ENCODE measurements at regions of chr2 and their contacts with region 1.

Region 1: DNA sequence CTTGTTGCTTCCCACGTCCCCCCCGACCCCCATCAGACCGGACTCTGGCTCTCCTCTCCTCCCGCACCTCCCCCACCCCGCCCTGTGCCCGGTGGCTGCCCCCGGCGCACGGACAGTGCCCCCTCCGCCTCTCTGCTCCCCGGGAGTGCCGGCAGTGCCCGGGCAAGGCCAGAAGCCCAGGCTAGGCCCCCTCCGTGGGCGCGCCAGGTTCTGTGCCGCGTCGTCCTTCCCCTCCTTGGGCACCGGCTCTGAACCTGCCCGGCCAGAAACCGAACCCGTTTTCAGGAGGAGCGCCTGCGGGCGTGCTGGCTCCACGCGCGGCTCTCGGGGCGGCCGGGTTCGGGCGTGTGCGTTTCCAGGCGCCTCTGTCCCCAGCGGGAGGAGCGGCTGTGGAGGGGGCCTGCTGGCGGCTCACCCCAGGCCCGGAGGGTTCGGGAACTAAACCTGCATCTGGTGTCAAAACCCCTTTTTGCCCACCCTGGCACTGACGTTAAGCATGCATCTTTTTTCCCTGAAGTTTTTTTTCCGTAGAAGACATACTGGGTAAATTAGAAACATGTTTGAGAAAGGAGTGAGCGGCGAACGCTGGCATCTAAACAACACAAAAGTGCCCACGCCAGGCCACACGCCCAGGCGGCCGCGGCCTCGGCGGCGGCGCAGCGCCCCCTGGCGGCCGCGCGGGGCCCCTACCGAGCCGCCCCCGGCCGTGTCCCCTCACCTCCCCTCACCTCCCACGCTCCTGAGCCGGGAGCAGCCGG is 123.9 kb upstream of the SLC1A4 start:
- DNase-seq: peak; percentile 78
- ATAC-seq: peak; percentile 74
- H3K4me3 Mint-ChIP-seq: peak overlapping the region; percentile 52
- H3K27ac Mint-ChIP-seq: no peak overlapping the region
- H3K4me1 Mint-ChIP-seq: no peaks in the 10 kb centered on the region
- H3K27me3 Mint-ChIP-seq: peaks cover 6% of the 10 kb centered on the region

Region 2: GRCh38 chr2:64052468-64053241 is 812.6 kb before region 1 on chr2:
- CTCF ChIA-PET with region 1: no interaction called
- POLR2A ChIA-PET with region 1: no interaction called
- intact Hi-C with region 1: loop called (anchors 5 kb)
- DNase-seq: no peak
- ATAC-seq: no peak
- H3K4me3 Mint-ChIP-seq: no peak overlapping the region
- H3K27ac Mint-ChIP-seq: no peak overlapping the region
- H3K4me1 Mint-ChIP-seq: peaks cover 40% of the 10 kb centered on the region
- H3K27me3 Mint-ChIP-seq: no peaks in the 10 kb centered on the region

Region 3: GRCh38 chr2:64586883-64587481 is 278.3 kb before region 1 on chr2:
- CTCF ChIA-PET with region 1: interaction called, 7 read pairs
- POLR2A ChIA-PET with region 1: no interaction called
- intact Hi-C with region 1: loop called (anchors 1 kb)
- DNase-seq: no peak
- ATAC-seq: peak; percentile 44
- H3K4me3 Mint-ChIP-seq: no peak overlapping the region
- H3K27ac Mint-ChIP-seq: no peak overlapping the region
- H3K4me1 Mint-ChIP-seq: peaks cover 20% of the 10 kb centered on the region
- H3K27me3 Mint-ChIP-seq: no peaks in the 10 kb centered on the region

Region 4: DNA sequence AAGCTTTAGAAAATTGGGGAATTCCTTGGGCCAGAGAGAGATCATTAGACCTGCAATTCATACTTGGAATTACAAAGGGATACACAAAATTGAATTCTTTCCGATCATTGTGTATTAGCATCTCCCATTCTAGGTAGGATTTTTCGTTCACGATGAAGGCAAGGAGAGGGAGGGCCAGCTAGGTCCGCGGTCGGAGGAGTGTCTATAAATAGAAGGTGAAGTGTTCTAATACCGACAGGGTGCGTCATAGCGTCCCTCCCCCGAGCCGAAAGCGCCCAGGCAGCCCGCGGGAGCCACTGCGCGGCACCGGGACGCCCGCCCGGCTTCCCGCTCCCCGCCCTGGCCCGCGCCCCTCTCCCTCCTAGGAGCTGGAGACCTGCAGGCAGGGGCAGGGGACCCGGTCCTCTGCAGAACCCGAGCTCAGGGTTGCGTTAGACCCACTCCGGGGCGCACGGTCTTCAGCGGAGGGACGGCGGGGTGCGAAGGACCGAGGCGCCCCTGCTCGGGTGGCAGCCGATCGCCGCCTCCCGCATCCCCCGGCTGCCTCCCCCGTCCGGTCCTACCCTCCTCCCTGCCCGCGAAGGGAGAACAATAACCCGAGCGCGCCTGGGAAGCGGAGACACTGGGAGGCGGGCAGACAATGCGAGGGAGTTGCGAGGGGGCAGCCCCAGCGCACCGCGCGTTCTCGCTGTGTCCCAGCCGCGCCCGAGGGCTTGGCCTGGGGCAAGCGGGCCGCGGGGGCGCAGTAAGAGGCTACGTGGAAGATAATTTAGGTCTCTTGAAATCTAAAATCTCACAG is 97.4 kb before region 1 on chr2:
- CTCF ChIA-PET with region 1: no interaction called
- POLR2A ChIA-PET with region 1: no interaction called
- intact Hi-C with region 1: loop called in 1 of 2 experiments (anchors 1 kb)
- DNase-seq: peak; percentile 86
- ATAC-seq: peak; percentile 84
- H3K4me3 Mint-ChIP-seq: peak overlapping the region; percentile 71
- H3K27ac Mint-ChIP-seq: peak overlapping the region; percentile 80
- H3K4me1 Mint-ChIP-seq: peaks cover 25% of the 10 kb centered on the region
- H3K27me3 Mint-ChIP-seq: peaks cover 2% of the 10 kb centered on the region

Region 5: DNA sequence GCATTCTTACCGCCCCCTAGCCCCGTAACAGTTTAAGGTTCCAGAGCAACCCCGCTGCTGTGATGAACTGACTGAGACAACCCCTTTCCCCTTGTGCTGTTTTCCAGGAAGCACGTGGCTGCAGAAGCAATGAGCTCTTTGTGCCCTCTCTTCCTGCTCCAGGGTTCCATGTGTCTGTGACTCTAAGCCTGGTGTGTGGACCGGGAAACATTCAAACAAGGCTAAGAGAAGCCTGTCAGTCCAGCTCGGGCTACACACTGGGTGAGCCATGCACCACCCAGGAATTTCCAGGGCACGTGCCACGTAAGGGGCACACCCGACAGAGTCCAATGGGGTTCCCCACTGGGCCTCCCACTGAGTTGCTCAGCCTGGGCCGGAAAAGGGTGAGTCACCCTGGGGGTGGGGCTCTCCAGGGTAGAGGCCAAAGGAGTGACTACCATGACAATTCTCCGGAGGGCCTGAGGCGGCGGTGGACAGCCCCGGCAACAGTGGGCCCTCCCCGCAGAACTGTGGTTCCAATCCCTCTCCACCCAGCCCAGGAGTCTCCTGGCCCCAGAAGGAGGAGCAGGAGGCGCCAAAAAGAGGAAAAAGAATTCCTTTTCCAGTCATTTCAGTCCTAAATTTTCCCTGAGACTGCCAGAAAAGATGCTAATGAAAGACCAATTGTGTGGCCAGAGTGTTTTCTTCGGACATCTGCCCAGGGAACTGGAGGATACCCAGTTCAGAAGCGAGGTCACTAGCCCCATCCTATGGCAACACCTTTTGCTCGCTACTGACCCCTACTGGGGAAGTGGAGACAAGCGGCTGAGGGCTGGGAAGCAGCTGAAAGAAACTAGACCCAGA is 33.9 kb before region 1 on chr2:
- CTCF ChIA-PET with region 1: interaction called, 6 read pairs
- POLR2A ChIA-PET with region 1: no interaction called
- intact Hi-C with region 1: loop called in 1 of 2 experiments (anchors 2 kb)
- DNase-seq: peak; percentile 92
- ATAC-seq: peak; percentile 96
- H3K4me3 Mint-ChIP-seq: peak overlapping the region; percentile 34
- H3K27ac Mint-ChIP-seq: peak overlapping the region; percentile 86
- H3K4me1 Mint-ChIP-seq: peaks cover 16% of the 10 kb centered on the region
- H3K27me3 Mint-ChIP-seq: no peaks in the 10 kb centered on the region